Vagina (tissue), 2 donors: ENCODE measurements at regions of chr1 and their contacts with region 1.

Region 1: DNA sequence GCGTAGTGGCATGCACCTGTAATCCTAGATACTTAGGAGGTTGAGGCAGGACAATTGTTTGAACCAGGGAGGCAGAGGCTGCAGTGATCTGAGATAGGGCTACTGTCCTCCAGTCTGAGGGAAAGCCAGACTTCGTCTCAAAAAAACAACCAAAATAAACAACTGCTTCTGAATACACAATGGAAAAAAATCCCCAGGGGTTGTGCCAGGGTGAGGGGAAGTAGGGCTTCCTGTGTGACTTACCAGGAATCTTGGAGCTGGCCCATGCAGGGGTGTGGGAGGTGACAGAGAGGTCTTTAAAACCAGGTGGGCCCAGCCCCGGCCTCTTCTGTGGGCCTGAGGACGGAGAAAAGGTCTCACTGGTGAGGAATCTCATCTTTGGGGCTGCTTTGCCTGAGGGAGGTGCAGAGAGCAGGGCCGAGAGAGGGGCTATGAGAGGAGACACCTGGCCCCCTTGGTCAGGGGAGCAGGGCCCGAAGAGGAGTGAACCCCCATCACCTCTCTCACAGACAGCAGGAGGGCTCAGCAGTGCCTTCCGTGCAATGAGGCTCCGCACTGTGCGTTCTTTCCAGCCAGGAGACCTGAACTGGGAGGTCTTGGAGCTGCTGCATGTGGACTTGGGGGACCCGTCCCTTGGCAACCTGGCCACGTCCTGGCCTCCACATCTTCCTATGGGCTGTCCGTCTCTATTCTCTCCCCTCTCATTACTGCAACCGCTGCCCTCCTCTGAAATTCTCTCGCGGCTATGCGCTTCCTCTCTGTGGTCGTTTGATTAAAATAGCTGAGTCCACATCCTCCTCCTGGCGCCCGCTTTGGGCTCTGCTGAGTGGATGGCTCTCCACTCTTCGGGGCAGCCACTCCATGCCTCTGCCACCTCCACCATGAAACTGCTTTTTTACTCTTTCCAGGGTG is 10.7 kb downstream of the PLA2G5 start:
- DNase-seq: no peak
- H3K4me3 ChIP-seq: no peak overlapping the region
- H3K27ac ChIP-seq: no peak overlapping the region
- H3K4me1 ChIP-seq: no peaks in the 10 kb centered on the region
- H3K27me3 ChIP-seq: no peaks in the 10 kb centered on the region
- CTCF ChIP-seq: no peak
- POLR2A ChIP-seq: no peak

Region 2: GRCh38 chr1:19325958-19326748 is 754.5 kb before region 1 on chr1:
- intact Hi-C with region 1: no loop called
- DNase-seq: no peak
- H3K4me3 ChIP-seq: no peak overlapping the region
- H3K27ac ChIP-seq: no peak overlapping the region
- H3K4me1 ChIP-seq: no peaks in the 10 kb centered on the region
- H3K27me3 ChIP-seq: no peaks in the 10 kb centered on the region
- CTCF ChIP-seq: no peak
- POLR2A ChIP-seq: no peak

Region 3: GRCh38 chr1:20448671-20449071 is 368.0 kb after region 1 on chr1:
- intact Hi-C with region 1: no loop called
- DNase-seq: no peak
- H3K4me3 ChIP-seq: no peak overlapping the region
- H3K27ac ChIP-seq: no peak overlapping the region
- H3K4me1 ChIP-seq: no peaks in the 10 kb centered on the region
- H3K27me3 ChIP-seq: no peaks in the 10 kb centered on the region
- CTCF ChIP-seq: no peak
- POLR2A ChIP-seq: no peak

Region 4: GRCh38 chr1:22001409-22001808 is 1920.7 kb after region 1 on chr1 and contains the start of gene CELA3A:
- intact Hi-C with region 1: loop called (anchors 5 kb)
- DNase-seq: no peak
- H3K4me3 ChIP-seq: no peak within 1 kb of the TSS
- H3K27ac ChIP-seq: no peak within 1 kb of the TSS
- H3K4me1 ChIP-seq: no peaks in the 10 kb centered on the region
- H3K27me3 ChIP-seq: no peaks in the 10 kb centered on the region
- CTCF ChIP-seq: no peak
- POLR2A ChIP-seq: no peak
- total RNA-seq, gene CELA3A: not detected